ENCODE measurements at regions of chr10 and their contacts with region 1.

Region 1: DNA sequence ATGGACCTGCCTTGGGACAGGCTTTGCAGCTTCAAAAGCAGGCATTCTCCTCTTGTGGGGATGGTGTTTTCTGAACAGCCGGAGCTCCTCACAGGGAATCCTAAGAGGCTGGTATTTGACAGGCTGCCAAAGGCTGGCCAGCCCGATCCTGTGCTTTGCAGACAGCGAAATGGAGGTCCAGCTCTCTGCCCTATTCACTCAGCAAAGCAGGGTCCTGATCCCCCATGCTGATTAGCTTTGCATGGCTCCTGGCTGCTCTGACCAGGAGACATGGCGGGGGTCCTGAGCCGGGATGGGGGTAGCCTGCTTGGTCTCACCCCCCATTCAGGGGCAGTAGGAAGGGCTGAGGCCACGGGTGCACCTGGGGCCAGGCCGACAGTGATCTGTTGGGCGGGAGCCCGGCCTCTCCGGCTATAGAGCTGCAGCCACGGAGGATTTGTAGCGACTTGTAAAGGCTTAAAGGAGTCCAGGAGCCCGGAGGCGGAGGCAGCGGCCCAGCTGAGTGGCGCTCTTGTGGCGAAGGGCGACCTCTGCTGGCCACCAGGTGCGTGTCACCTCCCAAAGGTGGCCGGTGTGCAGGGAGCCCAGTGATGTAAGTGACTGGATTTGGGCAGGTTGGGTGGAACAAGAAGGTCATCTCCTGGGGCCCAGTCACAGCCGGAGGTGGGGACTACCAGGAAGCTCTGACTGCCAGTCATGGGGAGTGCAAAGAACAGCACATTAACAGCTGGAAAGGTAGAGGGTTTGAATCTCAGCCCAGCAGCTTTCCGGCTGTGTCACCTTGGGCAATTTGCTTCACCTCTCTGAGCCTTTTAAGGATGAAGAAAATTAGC is 126.5 kb downstream of the ZMIZ1 start:
- DNase-seq: peak; percentile 84
- H3K4me3 Mint-ChIP-seq: no peak overlapping the region
- H3K27ac Mint-ChIP-seq: no peak overlapping the region
- H3K4me1 Mint-ChIP-seq: no peaks in the 10 kb centered on the region
- H3K27me3 Mint-ChIP-seq: peaks cover 4% of the 10 kb centered on the region

Region 2: DNA sequence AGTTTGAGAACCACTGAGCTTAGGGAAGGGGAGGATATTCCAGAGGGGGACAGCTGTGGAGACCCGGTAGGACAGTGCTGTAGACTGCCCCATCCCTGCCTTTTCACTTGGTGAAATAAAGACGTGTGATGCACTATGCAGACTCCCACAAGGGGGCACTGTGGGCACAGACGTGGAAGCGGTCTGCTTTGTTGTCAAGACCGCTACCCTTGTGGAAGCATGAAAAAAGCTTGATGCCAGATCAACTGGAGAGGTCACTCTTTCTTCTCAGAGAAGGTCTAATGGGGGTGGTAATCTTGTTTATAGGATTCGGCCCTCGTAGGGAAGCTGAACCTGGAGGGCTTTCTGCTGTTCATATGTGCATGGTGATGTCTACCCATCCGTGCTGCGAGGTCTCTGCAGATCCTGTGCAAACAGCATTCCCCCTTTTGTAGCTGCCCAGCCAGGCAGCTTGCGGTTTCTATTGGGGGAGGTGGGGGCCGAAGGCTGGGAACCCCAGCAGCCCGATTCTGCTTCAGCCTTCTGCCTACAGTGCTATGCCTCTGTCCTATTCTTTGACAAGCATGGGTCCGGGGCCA is 1147.9 kb before region 1 on chr10:
- CTCF ChIA-PET with region 1: interaction called, 62 read pairs
- DNase-seq: peak; percentile 90
- H3K4me3 Mint-ChIP-seq: no peak overlapping the region
- H3K27ac Mint-ChIP-seq: no peak overlapping the region
- H3K4me1 Mint-ChIP-seq: peaks cover 17% of the 10 kb centered on the region
- H3K27me3 Mint-ChIP-seq: no peaks in the 10 kb centered on the region

Region 3: DNA sequence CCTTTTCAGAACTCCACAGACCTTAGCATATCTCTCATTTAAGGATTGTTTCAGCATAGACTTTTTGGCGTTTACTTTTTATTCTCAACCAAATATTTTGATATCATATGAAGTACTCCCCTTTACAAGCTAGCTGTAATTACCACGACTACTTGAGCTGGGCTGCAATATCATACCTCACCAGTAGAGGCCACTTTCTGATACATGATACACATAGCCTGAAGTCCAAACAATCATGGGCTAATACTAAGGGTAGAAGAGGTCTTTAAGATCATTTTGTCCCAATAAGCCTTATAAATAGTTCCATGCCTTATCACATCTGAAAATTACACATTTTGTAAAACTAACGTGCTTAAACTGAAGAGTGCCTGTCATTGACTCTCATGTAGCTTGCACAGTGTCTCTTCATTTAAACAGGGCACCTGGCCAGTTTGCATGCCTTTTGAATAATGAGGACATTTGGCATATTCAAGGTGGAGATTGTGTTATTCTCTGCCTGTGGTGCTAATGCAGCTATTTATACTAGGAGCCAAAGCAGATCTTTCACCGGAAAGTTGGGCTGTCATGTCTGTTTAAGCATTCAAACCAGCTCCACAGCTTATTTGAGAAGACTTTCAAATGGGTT is 530.3 kb before region 1 on chr10:
- CTCF ChIA-PET with region 1: interaction called, 21 read pairs
- DNase-seq: peak; percentile 41
- H3K4me3 Mint-ChIP-seq: no peak overlapping the region
- H3K27ac Mint-ChIP-seq: no peak overlapping the region
- H3K4me1 Mint-ChIP-seq: no peaks in the 10 kb centered on the region
- H3K27me3 Mint-ChIP-seq: peaks cover 22% of the 10 kb centered on the region

Region 4: DNA sequence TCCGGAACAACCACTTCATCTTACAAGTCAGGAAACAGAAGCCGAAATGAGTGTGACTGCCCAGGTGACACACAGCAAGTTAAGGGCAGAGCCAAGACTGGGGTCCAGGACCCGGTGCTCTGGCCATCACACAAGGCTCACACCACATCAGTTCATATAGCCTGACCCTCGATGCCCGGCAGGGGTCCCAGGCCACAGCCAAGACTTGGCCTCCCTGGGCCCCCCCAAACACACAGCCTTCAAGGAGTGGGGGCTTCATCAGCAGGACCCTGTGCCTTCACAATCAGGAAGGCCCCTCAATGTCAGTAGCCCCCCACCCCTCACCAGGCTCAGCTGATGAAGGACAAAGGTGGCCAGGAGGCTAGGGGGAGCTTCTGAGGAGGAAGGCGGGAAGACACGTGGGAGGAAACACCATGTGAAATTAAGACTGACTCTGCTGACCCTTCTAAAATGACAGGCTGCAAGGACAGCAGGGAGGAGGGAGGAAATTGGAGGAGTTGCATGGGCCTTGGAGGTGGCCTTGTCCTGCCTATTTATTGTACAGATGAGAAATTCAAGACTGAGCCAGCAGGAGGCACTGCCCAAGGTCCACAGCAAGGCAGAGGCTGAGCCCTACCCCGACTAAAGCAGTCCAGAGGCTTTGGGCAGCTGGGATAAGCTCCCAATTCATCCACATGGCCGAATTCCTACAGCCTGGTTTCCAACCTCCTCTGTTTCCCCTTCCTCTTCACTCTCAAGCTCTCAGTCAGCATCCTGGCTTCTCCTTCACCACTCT is 342.7 kb before region 1 on chr10:
- CTCF ChIA-PET with region 1: interaction called, 21 read pairs
- DNase-seq: peak; percentile 39
- H3K4me3 Mint-ChIP-seq: no peak overlapping the region
- H3K27ac Mint-ChIP-seq: no peak overlapping the region
- H3K4me1 Mint-ChIP-seq: no peaks in the 10 kb centered on the region
- H3K27me3 Mint-ChIP-seq: no peaks in the 10 kb centered on the region

Region 5: GRCh38 chr10:78931321-78932053 is 263.8 kb before region 1 on chr10:
- CTCF ChIA-PET with region 1: interaction called, 15 read pairs
- DNase-seq: no peak
- H3K4me3 Mint-ChIP-seq: no peak overlapping the region
- H3K27ac Mint-ChIP-seq: no peak overlapping the region
- H3K4me1 Mint-ChIP-seq: no peaks in the 10 kb centered on the region
- H3K27me3 Mint-ChIP-seq: peaks cover 27% of the 10 kb centered on the region

Region 6: DNA sequence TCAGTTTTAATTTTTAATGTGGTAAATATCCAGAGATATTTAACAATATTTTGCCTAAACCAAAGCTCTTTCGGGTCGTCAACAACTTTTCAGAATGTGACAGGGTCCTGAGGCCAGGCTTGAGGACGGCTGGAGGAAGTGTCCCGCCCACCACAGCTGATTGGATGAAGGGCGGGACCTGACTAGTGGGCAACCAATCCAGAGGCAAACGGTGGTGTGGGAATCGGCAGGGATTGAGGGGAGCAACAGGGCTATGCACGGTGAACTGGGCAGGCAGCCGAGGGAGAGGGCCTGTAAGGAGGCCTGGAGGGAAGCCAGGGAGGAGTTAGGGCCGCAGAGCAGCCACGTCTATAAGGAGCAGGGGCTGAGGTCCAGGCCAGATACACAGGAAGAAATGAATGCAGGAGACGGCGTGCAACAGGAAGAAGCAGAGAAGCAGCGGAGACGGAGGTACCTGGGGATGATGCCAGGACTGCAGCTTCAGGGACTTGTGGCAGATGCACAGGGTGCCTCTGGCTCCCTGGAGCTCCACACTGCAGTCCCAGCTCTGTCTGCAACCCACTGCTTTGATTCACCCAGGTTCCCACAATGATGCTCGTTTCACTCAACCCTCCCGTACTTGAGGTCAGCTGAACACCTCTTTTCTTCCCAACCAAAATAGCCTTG is 172.6 kb before region 1 on chr10:
- CTCF ChIA-PET with region 1: no interaction called
- DNase-seq: no peak
- H3K4me3 Mint-ChIP-seq: peak overlapping the region; percentile 7
- H3K27ac Mint-ChIP-seq: peak overlapping the region; percentile 47
- H3K4me1 Mint-ChIP-seq: peaks cover 11% of the 10 kb centered on the region
- H3K27me3 Mint-ChIP-seq: peaks cover 4% of the 10 kb centered on the region

Region 7: DNA sequence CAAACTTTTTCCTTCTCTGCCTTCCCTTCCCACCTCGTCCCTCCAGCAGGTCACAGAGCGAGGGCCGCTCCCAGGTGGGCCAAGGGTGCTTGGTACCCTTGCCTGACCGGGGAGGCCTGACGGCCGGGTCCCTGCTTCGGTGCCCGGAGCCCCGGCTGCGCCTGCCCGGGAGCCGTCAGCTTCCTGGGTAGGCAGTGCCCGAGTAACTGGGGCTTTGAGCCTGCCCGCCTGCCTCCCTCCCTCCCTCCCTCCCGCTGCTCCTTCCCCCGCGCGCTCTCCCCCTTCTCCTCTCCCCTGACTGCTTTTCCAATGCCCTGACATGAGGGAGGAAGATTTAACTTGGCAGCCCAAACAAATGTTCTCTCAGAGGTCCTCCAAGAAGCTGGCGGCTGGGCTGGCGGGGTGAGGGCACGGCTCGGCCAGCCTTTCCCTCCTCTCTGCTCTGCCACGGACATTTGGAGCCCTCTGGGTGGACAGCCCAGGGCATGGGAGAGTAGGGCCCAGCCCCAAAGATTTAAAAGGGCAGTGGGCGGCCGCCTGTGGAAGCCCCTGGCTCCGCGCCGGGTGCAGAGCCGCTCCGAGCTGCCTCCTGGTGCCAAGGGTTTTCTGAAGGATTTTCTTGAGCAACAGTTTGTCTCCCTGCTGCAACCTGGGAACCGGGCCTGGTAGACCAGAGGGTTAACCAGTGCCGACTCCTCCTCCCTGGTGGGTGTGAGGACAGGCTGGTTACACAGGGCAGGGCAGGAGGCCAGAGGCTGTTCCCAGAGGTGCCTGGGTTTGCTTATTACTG is 124.5 kb before region 1 on chr10:
- CTCF ChIA-PET with region 1: interaction called, 11 read pairs
- DNase-seq: peak; percentile 48
- H3K4me3 Mint-ChIP-seq: peak overlapping the region; percentile 95
- H3K27ac Mint-ChIP-seq: peak overlapping the region; percentile 52
- H3K4me1 Mint-ChIP-seq: peaks cover 35% of the 10 kb centered on the region
- H3K27me3 Mint-ChIP-seq: peaks cover 68% of the 10 kb centered on the region

Region 8: GRCh38 chr10:79178614-79179163 is 16.6 kb before region 1 on chr10:
- CTCF ChIA-PET with region 1: interaction called, 13 read pairs
- DNase-seq: no peak
- H3K4me3 Mint-ChIP-seq: no peak overlapping the region
- H3K27ac Mint-ChIP-seq: no peak overlapping the region
- H3K4me1 Mint-ChIP-seq: no peaks in the 10 kb centered on the region
- H3K27me3 Mint-ChIP-seq: peaks cover 8% of the 10 kb centered on the region

Region 9: DNA sequence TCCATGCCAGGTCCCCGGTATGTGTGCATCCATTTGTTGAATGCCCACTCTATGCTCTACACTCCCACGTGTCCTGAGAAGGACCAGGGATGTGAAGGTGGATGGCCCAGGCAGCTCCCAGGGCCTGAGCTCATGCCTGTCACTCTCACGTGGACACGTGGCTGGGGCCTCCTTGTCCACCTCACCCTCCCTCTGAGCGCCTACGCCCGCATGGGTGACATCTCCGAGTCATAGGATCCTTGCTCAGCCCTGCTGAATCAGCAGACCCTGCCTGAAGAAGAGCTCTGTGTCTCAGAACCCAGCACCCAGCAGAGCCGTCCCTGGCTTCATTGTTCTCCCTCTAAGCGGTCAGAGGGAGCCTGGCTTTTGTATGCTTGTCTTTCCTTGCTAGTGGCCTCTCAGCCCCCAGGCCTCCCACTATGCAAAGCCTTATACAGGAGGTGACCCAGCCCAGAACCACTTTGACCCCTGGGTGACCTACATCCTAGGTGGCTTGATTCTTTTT is 44.0 kb after region 1 on chr10:
- CTCF ChIA-PET with region 1: no interaction called
- DNase-seq: no peak
- H3K4me3 Mint-ChIP-seq: no peak overlapping the region
- H3K27ac Mint-ChIP-seq: no peak overlapping the region
- H3K4me1 Mint-ChIP-seq: peaks cover 30% of the 10 kb centered on the region
- H3K27me3 Mint-ChIP-seq: peaks cover 14% of the 10 kb centered on the region

Region 10: DNA sequence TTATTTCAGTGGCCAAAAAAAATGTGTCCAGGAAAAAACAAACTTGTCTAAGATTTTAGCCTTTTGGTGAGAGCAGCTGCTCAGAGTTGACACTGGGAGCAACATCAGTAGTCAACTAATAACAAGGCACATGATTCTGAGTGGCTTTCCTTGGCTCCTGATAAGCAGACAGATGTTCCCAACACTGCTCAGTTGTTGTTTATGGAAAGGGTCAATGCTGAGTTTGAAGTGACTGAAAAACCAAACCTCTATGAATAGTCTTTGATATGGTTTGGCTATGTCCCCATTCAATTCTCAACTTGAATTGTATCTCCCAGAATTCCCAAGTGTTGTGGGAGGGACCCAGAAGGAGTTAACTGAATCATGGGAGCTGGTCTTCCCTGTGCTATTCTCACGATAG is 1149.0 kb after region 1 on chr10:
- CTCF ChIA-PET with region 1: no interaction called
- DNase-seq: no peak
- H3K4me3 Mint-ChIP-seq: no peak overlapping the region
- H3K27ac Mint-ChIP-seq: no peak overlapping the region
- H3K4me1 Mint-ChIP-seq: no peaks in the 10 kb centered on the region
- H3K27me3 Mint-ChIP-seq: no peaks in the 10 kb centered on the region